Left lung (tissue), 14 donors: ENCODE measurements at regions of chr17 and their contacts with region 1.

Region 1: DNA sequence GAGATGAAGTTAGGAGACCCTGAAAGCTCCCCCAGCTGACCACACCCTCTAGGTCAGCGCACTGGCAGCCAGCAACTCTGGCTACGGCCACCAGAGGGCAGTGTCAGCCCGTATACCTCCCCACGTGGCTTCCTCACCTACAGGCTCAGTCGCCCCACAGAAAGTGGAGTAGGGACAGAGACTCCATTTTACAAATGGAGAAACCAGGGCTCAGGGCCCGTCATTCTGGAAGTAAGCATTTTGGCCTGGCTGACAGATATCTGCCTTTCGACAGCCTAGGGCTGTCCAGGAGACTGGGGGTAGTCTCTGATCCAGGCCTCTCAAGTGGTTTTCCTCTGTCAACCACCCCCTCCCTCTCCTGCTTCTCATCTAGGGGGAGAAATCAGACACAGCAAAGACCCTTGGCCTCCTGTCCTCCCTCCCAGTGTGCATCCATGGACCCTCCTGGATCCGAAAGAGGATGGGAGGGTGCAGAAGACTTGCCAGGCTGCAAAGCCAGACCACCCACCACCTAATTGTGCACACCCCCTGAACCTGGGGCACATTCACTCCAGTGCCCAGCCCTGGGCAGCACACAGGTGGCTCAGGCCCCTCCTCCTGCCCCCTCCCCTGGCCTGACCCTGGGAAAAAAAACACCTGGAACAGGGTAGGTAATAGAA is 3.8 kb upstream of the HAP1 start:
- DNase-seq: peak; percentile 66 to 94 (median 82)
- ATAC-seq: peak; percentile 96
- H3K4me3 ChIP-seq: no peak overlapping the region
- H3K27ac ChIP-seq: no peak overlapping the region
- H3K4me1 ChIP-seq: peaks cover 14 to 15% of the 10 kb centered on the region in 2 donors
- H3K27me3 ChIP-seq: peaks cover 34 to 47% of the 10 kb centered on the region in 2 donors
- CTCF ChIP-seq: peak; percentile 95 to 99

Region 2: GRCh38 chr17:41801374-41802271 is 63.4 kb after region 1 on chr17:
- intact Hi-C with region 1: loop called (anchors 2 to 10 kb)
- DNase-seq: peak; percentile 77 to 92 (median 82)
- ATAC-seq: peak; percentile 91
- H3K4me3 ChIP-seq: no peak overlapping the region
- H3K27ac ChIP-seq: no peak overlapping the region
- H3K4me1 ChIP-seq: peaks cover 9 to 10% of the 10 kb centered on the region in 2 donors
- H3K27me3 ChIP-seq: no peaks in the 10 kb centered on the region
- CTCF ChIP-seq: peak; percentile 91 to 96

Region 3: GRCh38 chr17:41811549-41812380 is 73.6 kb after region 1 on chr17 and contains the start of gene P3H4:
- intact Hi-C with region 1: loop called (anchors 5 to 10 kb)
- DNase-seq: peak; percentile 80 to 92 (median 88)
- ATAC-seq: peak; percentile 90
- H3K4me3 ChIP-seq: peak within 1 kb of the TSS; percentile 63 to 74
- H3K27ac ChIP-seq: peak within 1 kb of the TSS; percentile 67 to 70
- H3K4me1 ChIP-seq: peaks cover 12 to 32% of the 10 kb centered on the region in 2 donors
- H3K27me3 ChIP-seq: peaks cover 0 to 36% of the 10 kb centered on the region in 2 donors
- CTCF ChIP-seq: peak; percentile 53 to 55
- polyA plus RNA-seq, gene P3H4: 28.5 to 47.1 (median 32.8) TPM